Testis (tissue), 5 donors: ENCODE measurements at regions of chr12 and their contacts with region 1.

Region 1: GRCh38 chr12:52585946-52586345 is 12.3 kb upstream of the KRT74 start:
- DNase-seq: no peak
- H3K4me3 ChIP-seq: no peak overlapping the region
- H3K27ac ChIP-seq: no peak overlapping the region
- H3K4me1 ChIP-seq: no peaks in the 10 kb centered on the region
- H3K27me3 ChIP-seq: no peaks in the 10 kb centered on the region
- CTCF ChIP-seq: no peak
- POLR2A ChIP-seq: no peak

Region 2: GRCh38 chr12:52865090-52865944 is 279.4 kb after region 1 on chr12:
- intact Hi-C with region 1: loop called (anchors 5 kb)
- DNase-seq: peak; percentile 77
- H3K4me3 ChIP-seq: no peak overlapping the region
- H3K27ac ChIP-seq: no peak overlapping the region
- H3K4me1 ChIP-seq: no peaks in the 10 kb centered on the region
- H3K27me3 ChIP-seq: no peaks in the 10 kb centered on the region
- CTCF ChIP-seq: peak; percentile 45 to 73 (median 70)
- POLR2A ChIP-seq: no peak